ENCODE measurements at regions of chr18 and their contacts with region 1.

Region 1: DNA sequence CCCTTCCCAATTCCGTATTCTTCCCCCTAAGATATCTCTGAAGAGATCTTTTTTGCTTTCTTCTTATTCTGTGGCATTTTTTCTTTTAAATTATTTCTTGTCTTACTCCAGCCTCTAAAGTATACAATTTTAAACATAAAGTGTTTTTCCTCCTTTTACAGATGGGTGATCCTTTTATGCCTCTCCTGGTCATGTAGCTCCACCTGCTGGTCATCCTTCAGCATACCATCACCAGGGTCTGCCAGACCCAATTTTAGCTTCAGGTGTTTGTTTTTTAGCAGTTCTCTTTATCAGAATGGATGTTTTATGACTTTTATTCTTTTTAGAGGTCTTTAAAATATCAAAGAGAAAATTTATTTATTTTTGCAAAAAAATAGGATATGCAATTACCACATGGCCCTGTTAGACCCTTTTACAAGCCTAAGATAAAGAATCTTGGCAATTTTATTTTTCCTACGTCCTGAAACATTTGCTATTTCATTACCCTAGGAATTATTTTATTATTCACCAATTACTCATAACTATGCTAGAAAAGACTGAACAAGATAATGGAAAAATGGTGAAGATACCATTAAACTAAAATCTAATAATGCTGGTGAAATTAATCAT is 55.5 kb downstream of the PIGN start:
- DNase-seq: peak; percentile 10 to 74 (median 57)
- ATAC-seq: no peak
- H3K4me3 ChIP-seq: no peak overlapping the region
- H3K4me3 Mint-ChIP-seq: no peak overlapping the region
- H3K27ac ChIP-seq: no peak overlapping the region
- H3K27ac Mint-ChIP-seq: no peak overlapping the region
- H3K4me1 ChIP-seq: no peaks in the 10 kb centered on the region
- H3K4me1 Mint-ChIP-seq: no peaks in the 10 kb centered on the region
- H3K27me3 ChIP-seq: no peaks in the 10 kb centered on the region
- H3K27me3 Mint-ChIP-seq: no peaks in the 10 kb centered on the region
- CTCF ChIP-seq: peak; percentile 99

Region 2: GRCh38 chr18:61551586-61551985 is 579.8 kb before region 1 on chr18:
- CTCF ChIA-PET with region 1: interaction called, 3 read pairs
- POLR2A ChIA-PET with region 1: no interaction called
- intact Hi-C with region 1: loop called (anchors 1 kb)
- DNase-seq: peak in 3 of 9 experiments; percentile 12 to 56 (median 43)
- ATAC-seq: no peak
- H3K4me3 ChIP-seq: no peak overlapping the region
- H3K4me3 Mint-ChIP-seq: no peak overlapping the region
- H3K27ac ChIP-seq: no peak overlapping the region
- H3K27ac Mint-ChIP-seq: no peak overlapping the region
- H3K4me1 ChIP-seq: no peaks in the 10 kb centered on the region
- H3K4me1 Mint-ChIP-seq: peaks cover 6% of the 10 kb centered on the region
- H3K27me3 ChIP-seq: no peaks in the 10 kb centered on the region
- H3K27me3 Mint-ChIP-seq: no peaks in the 10 kb centered on the region
- CTCF ChIP-seq: peak; percentile 59

Region 3: DNA sequence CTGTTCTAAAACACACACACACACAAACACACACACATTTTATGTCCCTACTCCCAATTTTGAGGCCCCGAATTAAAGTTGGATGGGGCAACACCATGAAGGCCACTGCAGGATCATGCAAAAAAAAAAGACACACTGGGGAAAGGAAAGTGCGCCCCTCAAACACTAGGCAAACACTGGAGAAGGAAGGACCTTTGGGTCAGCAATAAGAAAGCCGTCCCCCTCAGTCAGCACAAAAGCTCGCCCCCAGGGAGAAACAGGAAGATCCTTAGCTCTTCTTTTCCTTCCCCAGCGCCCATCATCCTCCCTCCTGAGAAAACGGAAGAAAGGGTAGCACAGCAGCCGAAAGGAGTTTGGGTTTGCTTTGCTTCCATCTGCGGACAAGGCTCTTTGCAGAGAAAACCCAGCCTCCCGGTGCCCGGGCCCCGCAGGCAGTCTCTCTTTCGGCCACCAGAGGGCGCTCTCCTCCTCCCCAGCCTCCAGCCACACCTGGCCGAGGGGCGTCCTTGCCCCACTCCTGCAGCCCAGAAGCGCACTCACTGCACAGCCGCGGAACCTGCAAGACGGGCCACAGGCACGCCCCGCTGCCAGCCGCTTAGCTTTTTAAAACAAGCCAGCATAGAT is 549.7 kb before region 1 on chr18:
- CTCF ChIA-PET with region 1: interaction called, 44 read pairs
- POLR2A ChIA-PET with region 1: no interaction called
- intact Hi-C with region 1: loop called (anchors 1 kb)
- DNase-seq: peak; percentile 27 to 80 (median 59)
- ATAC-seq: peak; percentile 65
- H3K4me3 ChIP-seq: no peak overlapping the region
- H3K4me3 Mint-ChIP-seq: no peak overlapping the region
- H3K27ac ChIP-seq: no peak overlapping the region
- H3K27ac Mint-ChIP-seq: no peak overlapping the region
- H3K4me1 ChIP-seq: peaks cover 8% of the 10 kb centered on the region
- H3K4me1 Mint-ChIP-seq: peaks cover 7% of the 10 kb centered on the region
- H3K27me3 ChIP-seq: peaks cover 0 to 6% of the 10 kb centered on the region in 2 experiments
- H3K27me3 Mint-ChIP-seq: peaks cover 32% of the 10 kb centered on the region
- CTCF ChIP-seq: peak; percentile 94

Region 4: DNA sequence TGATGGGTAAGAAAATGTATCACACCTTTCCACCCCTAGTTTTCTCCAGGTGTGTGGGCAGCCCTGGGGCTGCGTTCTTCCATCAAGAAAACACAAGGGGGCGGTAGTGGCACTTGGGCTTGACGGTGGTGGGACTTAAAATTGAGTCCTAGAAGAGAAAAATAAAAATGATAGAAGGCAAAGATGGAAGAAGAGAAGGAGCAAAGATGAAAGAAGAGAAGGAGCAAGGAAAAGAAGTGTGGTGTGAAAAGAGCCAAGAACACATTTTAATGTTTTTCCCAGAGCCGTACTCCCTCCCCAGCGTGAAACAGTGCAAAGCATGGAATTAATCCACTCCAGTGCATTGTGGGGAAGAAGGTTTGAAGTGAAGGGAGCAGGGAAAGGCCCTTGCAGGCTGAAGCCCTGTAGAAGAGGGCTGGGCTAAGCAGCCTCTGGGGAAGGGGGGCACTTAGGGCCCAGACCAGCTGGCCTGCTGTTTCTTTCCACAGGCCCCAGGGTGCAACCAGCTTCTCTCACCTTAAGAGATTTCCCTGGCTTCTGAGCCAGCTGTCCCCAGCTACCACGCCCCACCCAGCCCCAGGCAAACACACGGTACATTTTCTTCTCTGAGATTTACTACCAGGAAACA is 495.4 kb before region 1 on chr18:
- CTCF ChIA-PET with region 1: interaction called, 16 read pairs
- POLR2A ChIA-PET with region 1: no interaction called
- intact Hi-C with region 1: loop called (anchors 1 kb)
- DNase-seq: peak in 4 of 9 experiments; percentile 15 to 46 (median 30)
- ATAC-seq: no peak
- H3K4me3 ChIP-seq: no peak overlapping the region
- H3K4me3 Mint-ChIP-seq: no peak overlapping the region
- H3K27ac ChIP-seq: no peak overlapping the region
- H3K27ac Mint-ChIP-seq: no peak overlapping the region
- H3K4me1 ChIP-seq: no peaks in the 10 kb centered on the region
- H3K4me1 Mint-ChIP-seq: no peaks in the 10 kb centered on the region
- H3K27me3 ChIP-seq: no peaks in the 10 kb centered on the region
- H3K27me3 Mint-ChIP-seq: peaks cover 12% of the 10 kb centered on the region
- CTCF ChIP-seq: peak; percentile 59

Region 5: DNA sequence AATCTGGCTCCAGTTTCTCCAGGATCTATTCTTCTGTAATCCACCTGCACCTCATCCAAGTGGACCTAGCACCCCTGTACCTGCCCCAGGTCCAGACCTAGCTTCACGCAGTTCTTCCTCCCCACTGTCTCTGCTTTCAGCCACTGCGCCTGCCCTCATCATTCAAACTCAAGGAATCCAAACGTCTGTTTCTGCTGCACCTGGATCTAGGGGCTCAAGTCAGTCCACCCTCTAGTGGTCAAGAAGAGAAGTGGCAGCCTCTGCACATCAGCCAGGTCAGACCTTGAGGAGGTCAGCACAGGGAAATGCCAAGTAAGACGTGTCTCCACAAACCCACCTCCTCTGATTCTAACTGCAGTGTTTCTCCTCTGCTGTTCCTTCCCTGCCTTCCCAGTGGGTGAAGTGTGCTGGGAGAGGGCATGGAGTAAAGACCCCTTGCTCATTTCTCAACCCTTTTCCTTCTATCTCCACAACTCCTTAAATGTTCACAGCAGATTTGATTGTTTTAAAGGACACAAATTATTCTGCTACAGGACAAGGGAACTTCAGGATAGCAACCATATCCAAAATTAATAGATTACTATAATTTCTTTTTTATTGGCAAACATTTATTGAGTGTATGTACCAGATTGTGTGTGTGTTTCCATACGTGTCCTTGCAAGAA is 229.9 kb before region 1 on chr18:
- CTCF ChIA-PET with region 1: interaction called, 5 read pairs
- POLR2A ChIA-PET with region 1: no interaction called
- intact Hi-C with region 1: loop called in 1 of 2 experiments (anchors 1 kb)
- DNase-seq: peak in 7 of 9 experiments; percentile 24 to 65 (median 44)
- ATAC-seq: peak; percentile 90
- H3K4me3 ChIP-seq: no peak overlapping the region
- H3K4me3 Mint-ChIP-seq: no peak overlapping the region
- H3K27ac ChIP-seq: no peak overlapping the region
- H3K27ac Mint-ChIP-seq: no peak overlapping the region
- H3K4me1 ChIP-seq: no peaks in the 10 kb centered on the region
- H3K4me1 Mint-ChIP-seq: no peaks in the 10 kb centered on the region
- H3K27me3 ChIP-seq: no peaks in the 10 kb centered on the region
- H3K27me3 Mint-ChIP-seq: peaks cover 29% of the 10 kb centered on the region
- CTCF ChIP-seq: peak; percentile 85

Region 6: GRCh38 chr18:62069556-62069955 is 61.8 kb before region 1 on chr18:
- CTCF ChIA-PET with region 1: no interaction called
- POLR2A ChIA-PET with region 1: no interaction called
- intact Hi-C with region 1: no loop called
- DNase-seq: no peak
- ATAC-seq: no peak
- H3K4me3 ChIP-seq: no peak overlapping the region
- H3K4me3 Mint-ChIP-seq: no peak overlapping the region
- H3K27ac ChIP-seq: no peak overlapping the region
- H3K27ac Mint-ChIP-seq: no peak overlapping the region
- H3K4me1 ChIP-seq: no peaks in the 10 kb centered on the region
- H3K4me1 Mint-ChIP-seq: no peaks in the 10 kb centered on the region
- H3K27me3 ChIP-seq: no peaks in the 10 kb centered on the region
- H3K27me3 Mint-ChIP-seq: no peaks in the 10 kb centered on the region
- CTCF ChIP-seq: no peak

Region 7: DNA sequence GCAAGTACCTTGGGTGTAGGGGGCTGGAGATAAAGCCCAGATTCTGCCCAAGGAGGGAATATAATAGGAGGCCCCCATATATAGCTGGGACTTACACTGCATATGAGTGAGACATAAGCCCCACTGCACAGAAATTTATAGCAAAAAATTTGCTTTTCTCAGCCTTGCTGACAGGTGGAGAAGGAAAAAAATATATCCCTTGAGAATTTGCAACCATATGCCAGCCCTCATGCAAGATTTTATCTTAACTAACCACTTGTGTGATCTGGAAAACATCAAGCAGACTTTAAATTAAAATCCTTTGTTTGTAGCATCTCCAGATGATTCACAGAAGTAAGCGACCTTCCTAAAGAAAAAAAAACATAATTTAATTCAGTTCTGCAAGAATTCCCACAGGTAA is 900.0 kb after region 1 on chr18:
- CTCF ChIA-PET with region 1: no interaction called
- POLR2A ChIA-PET with region 1: no interaction called
- intact Hi-C with region 1: no loop called
- DNase-seq: no peak
- ATAC-seq: no peak
- H3K4me3 ChIP-seq: no peak overlapping the region
- H3K4me3 Mint-ChIP-seq: no peak overlapping the region
- H3K27ac ChIP-seq: no peak overlapping the region
- H3K27ac Mint-ChIP-seq: no peak overlapping the region
- H3K4me1 ChIP-seq: no peaks in the 10 kb centered on the region
- H3K4me1 Mint-ChIP-seq: no peaks in the 10 kb centered on the region
- H3K27me3 ChIP-seq: no peaks in the 10 kb centered on the region
- H3K27me3 Mint-ChIP-seq: no peaks in the 10 kb centered on the region
- CTCF ChIP-seq: no peak

Measured in CD8-positive, alpha-beta T cell (primary cell).